Naive thymus-derived CD4-positive, alpha-beta T cell (primary cell): ENCODE measurements at regions of chr12 and their contacts with region 1.

Region 1: GRCh38 chr12:133080368-133081158 is at the start of gene ZNF140:
- DNase-seq: peak; percentile 91 to 97 (median 96)
- ATAC-seq: peak; percentile 77
- H3K4me3 ChIP-seq: peak within 1 kb of the TSS; percentile 94
- H3K4me3 Mint-ChIP-seq: no peak within 1 kb of the TSS
- H3K27ac ChIP-seq: peak within 1 kb of the TSS; percentile 100
- H3K27ac Mint-ChIP-seq: peak within 1 kb of the TSS in 1 of 9 donors; percentile 41
- H3K4me1 ChIP-seq: peaks cover 7 to 11% of the 10 kb centered on the region in 2 donors
- H3K4me1 Mint-ChIP-seq: peaks cover 0 to 22% (median 10%) of the 10 kb centered on the region in 7 donors
- H3K27me3 ChIP-seq: no peaks in the 10 kb centered on the region
- H3K27me3 Mint-ChIP-seq: no peaks in the 10 kb centered on the region
- total RNA-seq, gene ZNF140: 11.2 to 29.9 (median 16.0) TPM

Region 2: GRCh38 chr12:132771126-132771838 is 309.3 kb before region 1 on chr12:
- CTCF ChIA-PET with region 1: no interaction called
- POLR2A ChIA-PET with region 1: no interaction called
- intact Hi-C with region 1: loop called in 1 of 2 experiments (anchors 1 kb)
- DNase-seq: peak in 8 of 9 donors; percentile 38 to 82 (median 76)
- ATAC-seq: peak; percentile 80
- H3K4me3 ChIP-seq: no peak overlapping the region
- H3K4me3 Mint-ChIP-seq: peak overlapping the region; percentile 66 to 82 (median 73)
- H3K27ac ChIP-seq: peak overlapping the region; percentile 69
- H3K27ac Mint-ChIP-seq: peak overlapping the region; percentile 62 to 93 (median 84)
- H3K4me1 ChIP-seq: peaks cover 4 to 68% of the 10 kb centered on the region in 2 donors
- H3K4me1 Mint-ChIP-seq: peaks cover 29 to 89% (median 73%) of the 10 kb centered on the region in 7 donors
- H3K27me3 ChIP-seq: no peaks in the 10 kb centered on the region
- H3K27me3 Mint-ChIP-seq: no peaks in the 10 kb centered on the region

Region 3: GRCh38 chr12:132956011-132956788 is 124.4 kb before region 1 on chr12 and contains the start of gene ZNF605:
- CTCF ChIA-PET with region 1: no interaction called
- POLR2A ChIA-PET with region 1: no interaction called
- intact Hi-C with region 1: loop called (anchors 1 kb)
- DNase-seq: peak; percentile 72 to 89 (median 80)
- ATAC-seq: peak; percentile 96
- H3K4me3 ChIP-seq: peak within 1 kb of the TSS; percentile 100
- H3K4me3 Mint-ChIP-seq: peak within 1 kb of the TSS; percentile 90 to 97 (median 95)
- H3K27ac ChIP-seq: peak within 1 kb of the TSS; percentile 85
- H3K27ac Mint-ChIP-seq: peak within 1 kb of the TSS; percentile 83 to 96 (median 91)
- H3K4me1 ChIP-seq: peaks cover 6 to 7% of the 10 kb centered on the region in 2 donors
- H3K4me1 Mint-ChIP-seq: peaks cover 19 to 53% (median 37%) of the 10 kb centered on the region in 7 donors
- H3K27me3 ChIP-seq: no peaks in the 10 kb centered on the region
- H3K27me3 Mint-ChIP-seq: no peaks in the 10 kb centered on the region
- total RNA-seq, gene ZNF605: 5.4 to 17.8 (median 11.8) TPM

Region 4: GRCh38 chr12:133130038-133130807 is 49.7 kb after region 1 on chr12 and contains the starts of genes ZNF10 and ZNF891:
- CTCF ChIA-PET with region 1: no interaction called
- POLR2A ChIA-PET with region 1: interaction called, 23 read pairs
- intact Hi-C with region 1: loop called (anchors 1 kb)
- DNase-seq: peak; percentile 96 to 99 (median 98)
- ATAC-seq: peak; percentile 93
- H3K4me3 ChIP-seq: peak within 1 kb of the TSS; percentile 62
- H3K4me3 Mint-ChIP-seq: peak within 1 kb of the TSS; percentile 90 to 99 (median 94)
- H3K27ac ChIP-seq: peak within 1 kb of the TSS; percentile 98
- H3K27ac Mint-ChIP-seq: peak within 1 kb of the TSS; percentile 97 to 100 (median 99)
- H3K4me1 ChIP-seq: peaks cover 0 to 7% of the 10 kb centered on the region in 2 donors
- H3K4me1 Mint-ChIP-seq: peaks cover 15 to 51% (median 27%) of the 10 kb centered on the region in 7 donors
- H3K27me3 ChIP-seq: no peaks in the 10 kb centered on the region
- H3K27me3 Mint-ChIP-seq: no peaks in the 10 kb centered on the region
- total RNA-seq, gene ZNF10: 5.2 to 35.0 (median 29.2) TPM
- total RNA-seq, gene ZNF891: 2.4 to 7.9 (median 6.6) TPM